CD4-positive, alpha-beta memory T cell (primary cell): ENCODE measurements at regions of chr6 and their contacts with region 1.

Region 1: DNA sequence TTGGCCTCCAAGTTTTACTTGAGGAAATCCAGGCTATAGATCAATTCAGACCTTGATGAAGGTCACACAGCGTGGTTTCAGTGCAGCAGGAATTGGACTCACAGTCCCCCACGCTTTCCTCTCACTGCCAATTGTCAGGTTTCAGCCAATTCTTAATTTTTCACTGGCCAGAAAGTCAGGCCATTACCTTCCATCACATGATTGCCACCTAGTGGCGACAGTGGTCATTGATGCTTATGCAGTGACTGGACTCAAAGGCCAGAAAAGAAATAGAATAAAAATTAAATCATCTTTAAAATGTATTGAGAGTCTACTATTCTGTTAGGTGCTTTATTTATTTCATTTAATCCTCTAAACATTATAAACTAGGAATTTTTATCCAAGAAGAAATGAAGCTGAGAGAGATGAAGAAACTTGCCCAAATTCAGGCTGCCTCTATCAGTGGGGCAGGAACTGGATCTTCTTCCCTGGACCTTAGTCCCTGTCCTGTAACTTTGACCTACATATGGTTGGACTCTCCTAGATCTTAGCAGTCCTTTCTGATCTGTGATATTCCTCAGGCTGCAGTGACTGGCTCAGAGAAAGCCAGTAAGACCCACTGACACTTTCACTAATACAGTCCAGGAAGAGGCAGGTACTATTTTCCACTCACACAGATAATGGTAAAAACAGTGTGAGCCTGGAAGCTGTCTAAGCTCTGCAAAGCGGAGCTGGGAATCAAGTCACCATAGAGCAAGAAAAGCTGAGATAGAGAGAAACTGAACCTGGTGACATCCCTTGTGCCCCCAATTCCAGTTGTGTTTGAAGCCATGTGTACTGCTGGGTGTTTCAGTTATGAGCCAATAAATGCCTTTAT is 133.3 kb downstream of the ELOVL4 start:
- DNase-seq: peak; percentile 26 to 44 (median 28)
- H3K4me3 ChIP-seq: no peak overlapping the region
- H3K4me3 Mint-ChIP-seq: no peak overlapping the region
- H3K27ac ChIP-seq: no peak overlapping the region
- H3K27ac Mint-ChIP-seq: no peak overlapping the region
- H3K4me1 ChIP-seq: no peaks in the 10 kb centered on the region
- H3K4me1 Mint-ChIP-seq: no peaks in the 10 kb centered on the region
- H3K27me3 ChIP-seq: no peaks in the 10 kb centered on the region
- H3K27me3 Mint-ChIP-seq: peaks cover 2 to 5% of the 10 kb centered on the region in 2 donors

Region 2: DNA sequence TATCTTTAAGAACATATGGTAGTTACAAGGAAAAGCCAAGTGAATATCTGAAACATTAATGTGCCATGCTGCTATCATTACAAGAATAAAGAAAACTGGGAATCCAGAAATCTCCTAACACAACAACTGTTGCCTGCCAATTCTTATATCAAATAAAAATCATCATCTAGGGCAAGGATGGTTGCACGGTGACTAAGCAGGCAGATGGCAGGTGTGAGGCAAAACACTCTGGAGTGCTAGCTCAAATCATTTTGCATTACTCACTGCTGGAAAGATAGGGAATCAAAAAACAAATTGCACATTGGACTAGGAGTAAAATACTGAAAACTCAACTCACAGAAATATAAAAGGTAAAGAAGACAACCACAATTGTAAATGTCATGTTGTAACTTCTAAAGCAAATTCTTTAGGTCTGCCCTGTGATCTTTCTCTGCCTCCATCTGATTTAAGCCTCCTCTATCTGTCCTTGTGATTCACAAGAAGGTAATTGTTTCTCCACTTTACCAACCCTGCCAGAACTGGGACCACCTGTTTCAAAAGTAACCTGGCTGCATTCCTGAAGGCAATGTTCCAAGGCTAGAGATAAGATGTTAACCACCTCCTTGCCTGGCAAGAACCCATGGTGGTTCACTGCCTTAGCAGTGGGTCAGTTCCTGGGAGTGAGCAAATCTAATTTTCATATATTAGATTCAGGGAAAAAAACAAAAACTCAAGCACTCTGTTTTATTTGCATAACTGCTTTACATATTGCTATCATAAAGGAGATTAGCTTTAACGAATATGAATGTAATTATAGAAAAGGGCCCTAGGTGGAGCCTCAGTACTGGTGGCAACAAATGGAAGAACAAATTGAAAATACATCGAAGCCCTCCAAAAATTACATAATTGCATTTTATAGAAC is 243.7 kb before region 1 on chr6:
- CTCF ChIA-PET with region 1: interaction called, 5 read pairs
- POLR2A ChIA-PET with region 1: no interaction called
- intact Hi-C with region 1: loop called (anchors 2 kb)
- DNase-seq: peak in 4 of 5 donors; percentile 9 to 26 (median 16)
- H3K4me3 ChIP-seq: no peak overlapping the region
- H3K4me3 Mint-ChIP-seq: peak overlapping the region in 1 of 8 donors; percentile 2
- H3K27ac ChIP-seq: no peak overlapping the region
- H3K27ac Mint-ChIP-seq: no peak overlapping the region
- H3K4me1 ChIP-seq: no peaks in the 10 kb centered on the region
- H3K4me1 Mint-ChIP-seq: no peaks in the 10 kb centered on the region
- H3K27me3 ChIP-seq: no peaks in the 10 kb centered on the region
- H3K27me3 Mint-ChIP-seq: peaks cover 1 to 3% of the 10 kb centered on the region in 2 donors

Region 3: GRCh38 chr6:79646006-79646405 is 168.1 kb before region 1 on chr6:
- CTCF ChIA-PET with region 1: no interaction called
- POLR2A ChIA-PET with region 1: no interaction called
- intact Hi-C with region 1: loop called (anchors 1 kb)
- DNase-seq: no peak
- H3K4me3 ChIP-seq: no peak overlapping the region
- H3K4me3 Mint-ChIP-seq: no peak overlapping the region
- H3K27ac ChIP-seq: no peak overlapping the region
- H3K27ac Mint-ChIP-seq: no peak overlapping the region
- H3K4me1 ChIP-seq: no peaks in the 10 kb centered on the region
- H3K4me1 Mint-ChIP-seq: peaks cover 0 to 1% (median 0%) of the 10 kb centered on the region in 4 donors
- H3K27me3 ChIP-seq: no peaks in the 10 kb centered on the region
- H3K27me3 Mint-ChIP-seq: peaks cover 2 to 11% of the 10 kb centered on the region in 2 donors

Region 4: GRCh38 chr6:79777713-79778579 is 36.1 kb before region 1 on chr6:
- CTCF ChIA-PET with region 1: interaction called, 11 read pairs
- POLR2A ChIA-PET with region 1: no interaction called
- intact Hi-C with region 1: loop called (anchors 1 kb)
- DNase-seq: peak; percentile 79 to 82 (median 81)
- H3K4me3 ChIP-seq: peak overlapping the region; percentile 11 to 67
- H3K4me3 Mint-ChIP-seq: peak overlapping the region; percentile 79 to 87 (median 80)
- H3K27ac ChIP-seq: no peak overlapping the region
- H3K27ac Mint-ChIP-seq: peak overlapping the region in 6 of 7 donors; percentile 23 to 65 (median 58)
- H3K4me1 ChIP-seq: peaks cover 7% of the 10 kb centered on the region
- H3K4me1 Mint-ChIP-seq: peaks cover 4 to 11% (median 8%) of the 10 kb centered on the region in 4 donors
- H3K27me3 ChIP-seq: no peaks in the 10 kb centered on the region
- H3K27me3 Mint-ChIP-seq: no peaks in the 10 kb centered on the region

Region 5: DNA sequence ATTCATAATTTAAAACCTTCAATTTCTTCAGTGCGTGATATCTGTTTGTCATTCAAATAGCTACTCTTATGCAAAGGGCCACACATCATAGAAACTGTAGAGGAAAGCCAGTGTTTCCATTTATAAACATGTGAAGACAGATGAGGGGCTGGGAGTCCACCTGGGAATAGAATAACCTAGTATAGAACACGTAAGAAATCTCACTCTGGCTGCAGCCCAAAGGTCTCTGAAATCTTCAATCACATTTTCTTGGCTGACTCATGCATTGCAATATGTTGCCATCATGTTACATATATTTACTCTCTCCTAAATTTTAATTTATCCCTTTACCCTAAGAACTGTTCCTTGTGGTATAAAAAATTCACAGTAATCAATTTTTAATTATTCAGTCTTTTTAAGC is 10.1 kb after region 1 on chr6:
- CTCF ChIA-PET with region 1: interaction called, 12 read pairs
- POLR2A ChIA-PET with region 1: no interaction called
- intact Hi-C with region 1: no loop called
- DNase-seq: no peak
- H3K4me3 ChIP-seq: no peak overlapping the region
- H3K4me3 Mint-ChIP-seq: no peak overlapping the region
- H3K27ac ChIP-seq: no peak overlapping the region
- H3K27ac Mint-ChIP-seq: no peak overlapping the region
- H3K4me1 ChIP-seq: no peaks in the 10 kb centered on the region
- H3K4me1 Mint-ChIP-seq: no peaks in the 10 kb centered on the region
- H3K27me3 ChIP-seq: no peaks in the 10 kb centered on the region
- H3K27me3 Mint-ChIP-seq: peaks cover 5 to 15% of the 10 kb centered on the region in 2 donors